ENCODE measurements at regions of chr7 and their contacts with region 1.

Region 1: DNA sequence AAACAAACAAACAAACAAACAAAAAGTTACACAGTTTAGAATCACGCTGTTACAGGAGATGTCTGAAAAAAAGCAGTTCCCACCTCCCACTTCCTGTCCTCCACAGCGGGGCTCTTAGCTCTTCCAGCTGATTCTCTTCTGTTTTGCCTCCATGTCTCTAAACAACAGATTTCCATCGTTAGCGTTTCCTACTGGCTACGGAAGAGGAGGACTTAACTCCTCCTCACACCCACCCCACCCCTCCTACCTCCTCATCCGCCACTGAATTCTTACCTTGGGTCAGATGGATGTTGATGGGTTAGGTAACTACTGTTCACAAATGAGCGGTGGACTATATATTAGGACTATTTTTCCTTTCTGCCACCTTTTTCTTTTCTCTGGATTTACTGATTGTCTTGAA is 36.8 kb upstream of the NUB1 start:
- DNase-seq: no peak
- H3K4me3 ChIP-seq: no peak overlapping the region
- H3K27ac ChIP-seq: no peak overlapping the region
- H3K4me1 ChIP-seq: peaks cover 3 to 9% (median 8%) of the 10 kb centered on the region in 4 donors
- H3K27me3 ChIP-seq: peaks cover 53% of the 10 kb centered on the region
- CTCF ChIP-seq: no peak
- EP300 ChIP-seq: no peak
- POLR2A ChIP-seq: no peak

Region 2: GRCh38 chr7:151123822-151124464 is 180.9 kb before region 1 on chr7:
- in situ Hi-C with region 1: no loop called
- intact Hi-C with region 1: loop called (anchors 10 kb)
- DNase-seq: peak; percentile 88
- H3K4me3 ChIP-seq: no peak overlapping the region
- H3K27ac ChIP-seq: no peak overlapping the region
- H3K4me1 ChIP-seq: peaks cover 0 to 25% (median 19%) of the 10 kb centered on the region in 4 donors
- H3K27me3 ChIP-seq: no peaks in the 10 kb centered on the region
- CTCF ChIP-seq: peak; percentile 97 to 99 (median 97)
- EP300 ChIP-seq: no peak
- POLR2A ChIP-seq: no peak

Region 3: DNA sequence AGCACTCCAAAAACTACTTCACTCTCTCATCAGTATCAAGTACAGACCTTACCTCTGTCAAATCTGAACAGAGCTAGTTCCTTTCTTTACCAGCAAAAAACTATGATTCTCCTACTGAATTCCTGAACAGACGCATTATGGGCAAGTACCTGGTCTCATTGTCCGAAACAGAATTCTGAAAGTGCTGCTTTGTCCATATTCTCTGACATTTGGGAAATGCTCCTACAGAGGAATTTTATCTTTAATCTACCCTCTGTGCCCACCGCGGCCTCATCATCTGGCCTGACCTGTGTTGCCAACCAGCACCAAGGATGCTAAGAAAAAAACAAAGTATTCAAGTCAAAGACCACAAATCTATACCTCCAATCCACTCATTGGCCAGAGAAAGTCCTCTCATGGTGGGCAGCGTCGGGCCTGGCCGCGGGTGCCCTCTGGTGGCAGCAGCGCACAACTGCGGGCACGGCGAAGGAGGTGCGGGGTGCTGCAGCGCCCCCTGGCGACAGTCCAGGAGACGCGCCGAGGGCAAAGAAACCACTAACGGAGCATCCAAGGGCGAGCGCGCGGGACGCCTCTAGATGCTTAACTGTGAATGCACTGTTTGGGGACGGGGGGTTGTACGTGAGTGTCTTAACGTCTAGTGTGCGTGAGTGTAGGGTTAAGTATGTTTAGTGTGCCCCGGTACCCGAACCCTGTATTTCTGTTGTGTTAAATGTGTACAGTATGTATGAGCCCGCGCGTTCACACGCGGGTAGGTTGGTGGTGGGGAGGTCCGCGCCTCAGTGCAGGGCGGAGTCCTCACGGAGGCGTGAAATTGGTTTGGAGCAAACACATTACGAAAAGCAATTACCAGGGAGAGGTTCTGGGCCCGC is 132.3 kb before region 1 on chr7:
- in situ Hi-C with region 1: no loop called
- intact Hi-C with region 1: loop called (anchors 5 kb)
- DNase-seq: peak; percentile 78
- H3K4me3 ChIP-seq: no peak overlapping the region
- H3K27ac ChIP-seq: no peak overlapping the region
- H3K4me1 ChIP-seq: peaks cover 6 to 10% (median 9%) of the 10 kb centered on the region in 4 donors
- H3K27me3 ChIP-seq: peaks cover 88% of the 10 kb centered on the region
- CTCF ChIP-seq: peak; percentile 100
- EP300 ChIP-seq: no peak
- POLR2A ChIP-seq: no peak

Region 4: DNA sequence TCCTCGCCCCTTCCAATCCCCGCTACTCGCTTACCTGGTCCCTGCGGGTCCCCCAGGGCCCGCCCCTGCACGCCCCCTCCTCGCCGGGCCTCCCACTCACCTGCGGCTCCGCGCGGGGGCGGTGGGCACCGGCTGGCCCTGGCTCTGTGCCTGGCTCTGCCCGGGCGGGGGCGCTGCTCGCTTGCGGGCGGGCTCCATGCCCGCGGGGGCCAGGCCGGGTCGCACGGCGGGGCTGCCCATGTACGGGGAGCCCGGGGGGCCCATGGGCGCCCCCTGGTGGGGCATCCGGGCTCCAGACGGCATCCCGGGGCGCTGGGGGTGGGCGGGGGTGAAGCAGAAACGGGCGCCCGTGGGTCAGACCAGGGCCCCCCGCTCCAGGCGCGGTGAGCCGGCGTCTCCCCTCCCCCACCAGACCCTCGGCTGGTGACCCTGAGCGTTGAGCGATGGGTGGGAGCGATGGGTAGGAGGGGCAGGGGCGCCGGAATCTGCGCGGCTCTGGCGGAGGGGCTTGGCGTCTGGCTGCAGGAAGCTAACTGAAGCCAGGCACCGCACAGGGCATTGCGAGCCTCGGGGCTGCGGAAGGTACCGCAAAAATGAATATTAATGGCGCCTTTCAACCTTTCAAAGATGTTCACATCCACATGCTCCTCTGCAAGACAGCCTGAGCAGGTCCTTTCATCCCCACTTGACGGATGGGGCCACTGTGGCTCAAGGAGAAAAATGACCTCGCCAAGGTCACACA is 59.3 kb before region 1 on chr7:
- in situ Hi-C with region 1: no loop called
- intact Hi-C with region 1: loop called (anchors 5 kb)
- DNase-seq: peak; percentile 47
- H3K4me3 ChIP-seq: peak overlapping the region; percentile 15 to 40 (median 24)
- H3K27ac ChIP-seq: peak overlapping the region in 3 of 4 donors; percentile 30 to 96 (median 91)
- H3K4me1 ChIP-seq: peaks cover 21 to 64% (median 53%) of the 10 kb centered on the region in 4 donors
- H3K27me3 ChIP-seq: peaks cover 61% of the 10 kb centered on the region
- CTCF ChIP-seq: peak in 4 of 5 experiments; percentile 23 to 81 (median 67)
- EP300 ChIP-seq: no peak
- POLR2A ChIP-seq: no peak

Measured in transverse colon (tissue), 4 donors.